ENCODE measurements at regions of chr14 and their contacts with region 1.

Region 1: GRCh38 chr14:91323671-91324605 is 79.4 kb upstream of the GPR68 start:
- DNase-seq: peak; percentile 81
- H3K4me3 ChIP-seq: peak overlapping the region; percentile 36 to 50; a peak in 3 of 4 replicates
- H3K27ac ChIP-seq: peak overlapping the region in 1 of 2 experiments; percentile 53; a peak in 2 of 4 replicates
- H3K4me1 ChIP-seq: peaks cover 0 to 58% of the 10 kb centered on the region in 2 experiments; a peak in 1 of 4 replicates
- H3K27me3 ChIP-seq: no peaks in the 10 kb centered on the region
- CTCF ChIP-seq: peak; percentile 99
- EP300 ChIP-seq: no peak
- RAD21 ChIP-seq: peak; percentile 89

Region 2: GRCh38 chr14:91310606-91311283 is 13.2 kb before region 1 on chr14:
- CTCF ChIA-PET with region 1: interaction called, 12 read pairs
- POLR2A ChIA-PET with region 1: no interaction called
- DNase-seq: no peak
- H3K4me3 ChIP-seq: no peak overlapping the region
- H3K27ac ChIP-seq: no peak overlapping the region
- H3K4me1 ChIP-seq: no peaks in the 10 kb centered on the region
- H3K27me3 ChIP-seq: no peaks in the 10 kb centered on the region; the same call in 1 of the 2 replicates
- CTCF ChIP-seq: no peak
- EP300 ChIP-seq: no peak
- RAD21 ChIP-seq: no peak

Region 3: GRCh38 chr14:91354979-91355685 is 31.2 kb after region 1 on chr14:
- CTCF ChIA-PET with region 1: interaction called, 23 read pairs
- POLR2A ChIA-PET with region 1: no interaction called
- DNase-seq: peak; percentile 75
- H3K4me3 ChIP-seq: no peak overlapping the region
- H3K27ac ChIP-seq: no peak overlapping the region
- H3K4me1 ChIP-seq: peaks cover 0 to 8% of the 10 kb centered on the region in 2 experiments; a peak in 1 of 4 replicates
- H3K27me3 ChIP-seq: no peaks in the 10 kb centered on the region
- CTCF ChIP-seq: peak; percentile 34
- EP300 ChIP-seq: no peak
- RAD21 ChIP-seq: peak; percentile 42

Region 4: DNA sequence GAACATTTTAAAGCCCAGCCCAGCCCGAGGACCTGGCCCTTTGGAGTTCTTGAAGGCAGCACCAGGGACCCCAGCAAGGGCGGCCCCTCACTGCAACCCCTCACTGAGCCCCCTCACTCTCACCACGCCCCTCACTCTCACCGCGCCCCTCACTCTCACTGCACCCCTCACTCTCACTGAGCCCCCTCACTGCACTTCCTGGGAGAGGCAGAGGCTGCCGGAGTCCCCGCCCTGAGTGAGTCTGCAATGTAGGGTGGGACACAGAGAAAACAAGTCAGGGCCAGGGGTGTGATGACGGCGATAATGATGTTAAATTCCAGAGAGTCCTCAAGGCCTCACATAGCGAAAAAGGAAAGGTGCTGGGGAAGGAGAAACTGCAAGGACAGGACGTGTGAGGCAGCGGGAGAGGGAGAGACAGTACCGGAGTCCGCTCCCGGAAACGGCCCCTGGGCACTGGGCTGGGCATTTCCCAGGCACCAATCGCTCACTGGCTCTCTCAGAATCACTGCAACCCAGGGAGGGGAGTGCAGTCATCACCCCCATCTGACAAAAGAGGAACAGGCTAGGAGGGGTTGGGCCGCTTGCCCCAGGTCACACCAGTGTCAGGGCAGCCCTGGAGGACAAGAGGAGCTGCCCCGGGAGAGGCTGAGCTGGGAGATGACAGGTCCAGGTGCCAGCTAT is 68.8 kb after region 1 on chr14:
- CTCF ChIA-PET with region 1: interaction called, 11 read pairs
- POLR2A ChIA-PET with region 1: no interaction called
- DNase-seq: no peak
- H3K4me3 ChIP-seq: no peak overlapping the region
- H3K27ac ChIP-seq: no peak overlapping the region
- H3K4me1 ChIP-seq: peaks cover 0 to 25% of the 10 kb centered on the region in 2 experiments; a peak in 1 of 4 replicates
- H3K27me3 ChIP-seq: peaks cover 16% of the 10 kb centered on the region; the same call in 1 of the 2 replicates
- CTCF ChIP-seq: no peak
- EP300 ChIP-seq: no peak
- RAD21 ChIP-seq: no peak

Region 5: GRCh38 chr14:91418387-91419043 is 94.6 kb after region 1 on chr14:
- CTCF ChIA-PET with region 1: interaction called, 300 read pairs
- POLR2A ChIA-PET with region 1: interaction called, 3 read pairs
- DNase-seq: peak; percentile 78
- H3K4me3 ChIP-seq: peak overlapping the region; percentile 52 to 58
- H3K27ac ChIP-seq: no peak overlapping the region
- H3K4me1 ChIP-seq: peaks cover 0 to 22% of the 10 kb centered on the region in 2 experiments; a peak in 2 of 4 replicates
- H3K27me3 ChIP-seq: peaks cover 15% of the 10 kb centered on the region
- CTCF ChIP-seq: peak; percentile 98
- EP300 ChIP-seq: no peak
- RAD21 ChIP-seq: peak; percentile 91

Region 6: GRCh38 chr14:91523972-91524371 is 200.0 kb after region 1 on chr14:
- CTCF ChIA-PET with region 1: no interaction called
- POLR2A ChIA-PET with region 1: no interaction called
- DNase-seq: no peak
- H3K4me3 ChIP-seq: no peak overlapping the region
- H3K27ac ChIP-seq: no peak overlapping the region
- H3K4me1 ChIP-seq: no peaks in the 10 kb centered on the region
- H3K27me3 ChIP-seq: peaks cover 17% of the 10 kb centered on the region; the same call in 1 of the 2 replicates
- CTCF ChIP-seq: no peak
- EP300 ChIP-seq: no peak
- RAD21 ChIP-seq: no peak

Measured in SK-N-SH (cell line).